ENCODE measurements at regions of chr10 and their contacts with region 1.

Region 1: GRCh38 chr10:107081644-107082043 is 82.9 kb downstream of the SORCS1 start:
- DNase-seq: no peak
- ATAC-seq: no peak
- H3K4me3 ChIP-seq: no peak overlapping the region
- H3K27ac ChIP-seq: no peak overlapping the region
- H3K4me1 ChIP-seq: no peaks in the 10 kb centered on the region
- H3K27me3 ChIP-seq: no peaks in the 10 kb centered on the region
- CTCF ChIP-seq: no peak
- POLR2A ChIP-seq: no peak

Region 2: GRCh38 chr10:106728232-106728631 is 353.4 kb before region 1 on chr10:
- in situ Hi-C with region 1: no loop called
- intact Hi-C with region 1: no loop called
- DNase-seq: no peak
- ATAC-seq: no peak
- H3K4me3 ChIP-seq: no peak overlapping the region
- H3K27ac ChIP-seq: no peak overlapping the region
- H3K4me1 ChIP-seq: no peaks in the 10 kb centered on the region
- H3K27me3 ChIP-seq: no peaks in the 10 kb centered on the region
- CTCF ChIP-seq: no peak
- POLR2A ChIP-seq: no peak

Region 3: DNA sequence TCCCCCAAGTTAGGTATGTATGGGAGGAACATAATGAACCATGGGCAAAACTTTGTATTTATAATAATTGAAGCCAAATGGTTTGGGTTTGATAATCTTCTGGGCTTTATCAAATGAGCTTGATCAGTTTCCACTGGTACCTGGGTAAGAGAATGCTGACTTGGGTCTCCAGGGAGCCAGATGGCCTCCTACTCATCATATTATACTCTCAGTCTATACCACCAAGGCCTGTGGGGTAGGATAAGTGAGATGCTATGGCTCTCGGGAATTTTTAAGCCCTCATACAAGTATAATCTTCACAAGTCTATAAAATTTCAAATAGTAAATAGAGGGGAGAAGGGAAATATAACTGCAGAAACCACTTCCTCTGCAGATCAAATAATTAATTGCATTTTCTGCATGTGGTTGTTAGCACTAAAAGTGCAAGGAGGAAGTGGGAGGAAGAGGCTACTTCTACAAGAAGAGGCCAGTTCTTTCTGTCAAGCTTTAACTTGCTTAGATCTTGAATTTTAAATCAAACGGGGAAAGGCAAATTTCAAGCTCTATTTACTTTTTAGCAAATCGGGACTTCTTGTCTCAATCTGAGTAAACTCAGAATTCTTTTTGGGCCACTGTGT is 266.1 kb before region 1 on chr10:
- in situ Hi-C with region 1: no loop called
- intact Hi-C with region 1: loop called (anchors 10 kb)
- DNase-seq: no peak
- ATAC-seq: no peak
- H3K4me3 ChIP-seq: no peak overlapping the region
- H3K27ac ChIP-seq: no peak overlapping the region
- H3K4me1 ChIP-seq: no peaks in the 10 kb centered on the region
- H3K27me3 ChIP-seq: no peaks in the 10 kb centered on the region
- CTCF ChIP-seq: no peak
- POLR2A ChIP-seq: no peak

Measured in gastrocnemius medialis (tissue), 4 donors.